CD4-positive, alpha-beta memory T cell (primary cell): ENCODE measurements at regions of chr1 and their contacts with region 1.

Region 1: GRCh38 chr1:110034451-110035235 is at the start of gene STRIP1:
- DNase-seq: peak; percentile 93 to 95 (median 95)
- H3K4me3 ChIP-seq: peak within 1 kb of the TSS; percentile 74 to 80
- H3K4me3 Mint-ChIP-seq: peak within 1 kb of the TSS; percentile 93 to 98 (median 97)
- H3K27ac ChIP-seq: peak within 1 kb of the TSS; percentile 97
- H3K27ac Mint-ChIP-seq: peak within 1 kb of the TSS; percentile 83 to 98 (median 95)
- H3K4me1 ChIP-seq: peaks cover 44% of the 10 kb centered on the region
- H3K4me1 Mint-ChIP-seq: peaks cover 34 to 66% (median 48%) of the 10 kb centered on the region in 4 donors
- H3K27me3 ChIP-seq: no peaks in the 10 kb centered on the region
- H3K27me3 Mint-ChIP-seq: no peaks in the 10 kb centered on the region
- total RNA-seq, gene STRIP1: 73.3 TPM

Region 2: DNA sequence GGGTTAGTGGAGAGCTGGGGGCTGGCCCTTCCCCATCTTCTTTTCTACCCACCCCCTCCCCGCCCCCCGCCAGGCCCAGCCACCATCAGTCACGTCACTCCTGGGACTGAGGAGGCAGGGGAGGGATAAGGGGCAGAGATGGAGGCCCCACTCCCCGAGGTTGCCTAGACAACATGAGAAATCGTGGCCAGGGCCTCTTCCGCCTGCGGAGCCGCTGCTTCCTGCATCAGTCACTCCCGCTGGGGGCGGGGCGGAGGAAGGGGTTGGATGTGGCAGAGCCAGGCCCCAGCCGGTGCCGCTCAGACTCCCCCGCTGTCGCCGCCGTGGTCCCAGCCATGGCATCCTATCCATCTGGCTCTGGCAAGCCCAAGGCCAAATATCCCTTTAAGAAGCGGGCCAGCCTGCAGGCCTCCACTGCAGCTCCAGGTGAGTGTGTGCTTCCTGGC is 413.8 kb before region 1 on chr1:
- CTCF ChIA-PET with region 1: no interaction called
- POLR2A ChIA-PET with region 1: interaction called, 3 read pairs
- intact Hi-C with region 1: loop called (anchors 1 kb)
- DNase-seq: peak; percentile 96 to 99 (median 97)
- H3K4me3 ChIP-seq: peak overlapping the region; percentile 76 to 93
- H3K4me3 Mint-ChIP-seq: peak overlapping the region; percentile 92 to 99 (median 96)
- H3K27ac ChIP-seq: peak overlapping the region; percentile 96
- H3K27ac Mint-ChIP-seq: peak overlapping the region; percentile 91 to 99 (median 99)
- H3K4me1 ChIP-seq: peaks cover 72% of the 10 kb centered on the region
- H3K4me1 Mint-ChIP-seq: peaks cover 47 to 86% (median 58%) of the 10 kb centered on the region in 4 donors
- H3K27me3 ChIP-seq: no peaks in the 10 kb centered on the region
- H3K27me3 Mint-ChIP-seq: no peaks in the 10 kb centered on the region

Region 3: GRCh38 chr1:109933856-109934711 is 100.6 kb before region 1 on chr1:
- CTCF ChIA-PET with region 1: no interaction called
- POLR2A ChIA-PET with region 1: no interaction called
- intact Hi-C with region 1: no loop called
- DNase-seq: no peak
- H3K4me3 ChIP-seq: no peak overlapping the region
- H3K4me3 Mint-ChIP-seq: peak overlapping the region in 1 of 8 donors; percentile 39
- H3K27ac ChIP-seq: no peak overlapping the region
- H3K27ac Mint-ChIP-seq: peak overlapping the region in 4 of 7 donors; percentile 27 to 81 (median 54)
- H3K4me1 ChIP-seq: peaks cover 9% of the 10 kb centered on the region
- H3K4me1 Mint-ChIP-seq: peaks cover 0 to 14% (median 5%) of the 10 kb centered on the region in 4 donors
- H3K27me3 ChIP-seq: no peaks in the 10 kb centered on the region
- H3K27me3 Mint-ChIP-seq: no peaks in the 10 kb centered on the region

Region 4: DNA sequence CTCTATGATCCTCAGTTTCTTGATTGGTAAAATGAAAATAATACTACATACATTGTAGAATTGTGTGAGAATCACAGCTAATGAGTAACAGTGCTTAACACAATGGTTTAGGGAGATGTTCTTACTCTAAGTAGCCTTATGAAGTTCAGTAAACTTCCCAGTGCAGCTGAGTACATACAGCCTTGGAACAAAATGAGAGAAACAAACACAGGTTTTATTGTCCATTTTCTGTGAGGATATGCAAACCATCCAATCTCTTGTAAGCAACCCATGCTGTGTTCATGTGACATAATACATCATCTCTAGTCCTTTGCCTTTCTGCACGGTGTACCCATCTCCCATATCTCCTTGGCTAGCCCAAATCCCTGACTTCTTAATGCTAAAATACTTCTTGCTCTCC is 14.9 kb before region 1 on chr1:
- CTCF ChIA-PET with region 1: interaction called, 27 read pairs
- POLR2A ChIA-PET with region 1: interaction called, 4 read pairs
- intact Hi-C with region 1: no loop called
- DNase-seq: no peak
- H3K4me3 ChIP-seq: no peak overlapping the region
- H3K4me3 Mint-ChIP-seq: no peak overlapping the region
- H3K27ac ChIP-seq: no peak overlapping the region
- H3K27ac Mint-ChIP-seq: peak overlapping the region in 2 of 7 donors; percentile 11 to 61
- H3K4me1 ChIP-seq: no peaks in the 10 kb centered on the region
- H3K4me1 Mint-ChIP-seq: no peaks in the 10 kb centered on the region
- H3K27me3 ChIP-seq: no peaks in the 10 kb centered on the region
- H3K27me3 Mint-ChIP-seq: no peaks in the 10 kb centered on the region

Region 5: DNA sequence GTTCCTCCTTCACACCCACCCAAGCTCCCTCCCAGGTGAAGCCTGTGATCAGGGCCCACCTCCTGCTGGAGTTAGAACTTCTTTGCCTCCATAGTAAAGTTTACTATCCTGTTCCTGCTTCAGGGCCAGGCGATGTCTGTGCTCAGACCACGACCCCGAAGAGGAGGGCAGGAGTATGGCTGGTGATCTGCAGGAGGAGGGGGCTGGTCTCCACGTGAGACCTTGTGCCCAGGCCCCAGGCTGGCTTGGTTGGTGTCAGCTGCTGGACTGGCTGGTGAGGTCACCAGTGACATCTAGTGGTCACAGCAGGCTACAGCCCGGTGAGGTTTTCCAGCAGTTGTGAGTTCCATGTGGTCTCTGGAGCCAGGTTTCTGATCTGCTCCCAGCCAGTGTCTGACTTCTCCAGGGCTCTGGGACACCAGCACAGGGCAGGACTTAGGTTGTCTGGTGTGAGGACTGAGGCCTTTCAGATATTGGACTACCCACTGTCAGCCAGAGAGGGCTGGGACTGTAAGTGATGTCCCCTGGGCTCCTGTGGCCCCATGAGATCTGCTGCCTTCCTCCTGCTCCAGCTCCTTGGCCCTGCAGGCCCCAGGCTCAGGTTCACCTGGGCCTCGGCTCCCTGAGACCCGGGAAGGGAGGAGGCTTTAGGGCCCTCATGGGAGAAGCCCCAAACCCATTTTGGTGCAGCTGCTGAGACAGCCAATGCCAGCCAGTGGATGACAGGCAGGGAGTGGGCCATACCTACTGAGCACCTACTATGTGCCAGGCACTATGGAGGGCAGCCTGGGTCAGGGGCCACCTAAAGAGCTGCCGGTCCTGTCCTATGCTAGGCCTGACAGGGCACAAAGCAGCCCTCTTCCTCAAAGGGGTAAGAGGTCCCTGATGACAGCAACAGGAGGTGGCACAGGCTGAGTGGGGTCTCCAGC is 71.6 kb after region 1 on chr1:
- CTCF ChIA-PET with region 1: interaction called, 44 read pairs
- POLR2A ChIA-PET with region 1: no interaction called
- intact Hi-C with region 1: no loop called
- DNase-seq: peak; percentile 43 to 56 (median 53)
- H3K4me3 ChIP-seq: no peak overlapping the region
- H3K4me3 Mint-ChIP-seq: no peak overlapping the region
- H3K27ac ChIP-seq: no peak overlapping the region
- H3K27ac Mint-ChIP-seq: peak overlapping the region in 1 of 7 donors; percentile 56
- H3K4me1 ChIP-seq: no peaks in the 10 kb centered on the region
- H3K4me1 Mint-ChIP-seq: no peaks in the 10 kb centered on the region
- H3K27me3 ChIP-seq: no peaks in the 10 kb centered on the region
- H3K27me3 Mint-ChIP-seq: peaks cover 6 to 10% of the 10 kb centered on the region in 2 donors

Region 6: GRCh38 chr1:110123224-110123623 is 88.6 kb after region 1 on chr1:
- CTCF ChIA-PET with region 1: no interaction called
- POLR2A ChIA-PET with region 1: no interaction called
- intact Hi-C with region 1: no loop called
- DNase-seq: no peak
- H3K4me3 ChIP-seq: no peak overlapping the region
- H3K4me3 Mint-ChIP-seq: no peak overlapping the region
- H3K27ac ChIP-seq: no peak overlapping the region
- H3K27ac Mint-ChIP-seq: no peak overlapping the region
- H3K4me1 ChIP-seq: no peaks in the 10 kb centered on the region
- H3K4me1 Mint-ChIP-seq: peaks cover 0 to 5% (median 2%) of the 10 kb centered on the region in 4 donors
- H3K27me3 ChIP-seq: no peaks in the 10 kb centered on the region
- H3K27me3 Mint-ChIP-seq: peaks cover 6 to 18% of the 10 kb centered on the region in 2 donors

Region 7: GRCh38 chr1:110328274-110328673 is 293.6 kb after region 1 on chr1:
- CTCF ChIA-PET with region 1: no interaction called
- POLR2A ChIA-PET with region 1: no interaction called
- intact Hi-C with region 1: no loop called
- DNase-seq: no peak
- H3K4me3 ChIP-seq: no peak overlapping the region
- H3K4me3 Mint-ChIP-seq: no peak overlapping the region
- H3K27ac ChIP-seq: no peak overlapping the region
- H3K27ac Mint-ChIP-seq: no peak overlapping the region
- H3K4me1 ChIP-seq: no peaks in the 10 kb centered on the region
- H3K4me1 Mint-ChIP-seq: no peaks in the 10 kb centered on the region
- H3K27me3 ChIP-seq: no peaks in the 10 kb centered on the region
- H3K27me3 Mint-ChIP-seq: no peaks in the 10 kb centered on the region

Region 8: DNA sequence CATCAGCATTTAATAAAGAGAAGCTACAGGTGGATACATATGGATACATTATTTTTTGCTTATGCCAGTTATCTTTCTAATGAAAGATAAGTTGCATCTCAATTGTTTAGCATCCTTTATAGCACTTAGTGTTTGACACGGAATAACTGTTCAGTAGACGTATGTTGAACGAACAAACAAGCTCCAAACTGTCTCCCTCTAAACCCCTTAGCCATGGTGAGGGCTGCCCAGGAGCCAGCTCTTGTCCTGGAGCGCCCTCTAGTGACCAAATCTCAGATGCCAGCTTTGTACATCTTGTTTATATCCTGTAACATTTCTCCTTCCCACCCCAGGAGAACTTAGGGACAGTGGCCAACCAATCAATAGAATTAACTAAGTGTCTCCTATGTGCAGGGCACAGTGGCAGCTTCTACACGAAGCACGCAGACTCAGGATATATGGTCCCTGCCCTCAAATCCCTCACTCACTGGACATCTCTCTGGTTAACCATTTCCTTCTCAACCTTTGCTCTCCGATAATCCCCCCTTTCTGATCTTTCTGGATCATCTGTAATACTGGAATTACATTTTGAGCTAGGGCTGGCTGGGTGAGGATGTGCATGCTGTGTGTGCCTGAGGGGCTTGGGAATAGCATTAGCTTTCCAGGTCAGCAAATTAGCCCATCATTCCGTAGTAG is 461.4 kb after region 1 on chr1:
- CTCF ChIA-PET with region 1: interaction called, 15 read pairs
- POLR2A ChIA-PET with region 1: no interaction called
- intact Hi-C with region 1: no loop called
- DNase-seq: peak; percentile 62 to 73 (median 69)
- H3K4me3 ChIP-seq: no peak overlapping the region
- H3K4me3 Mint-ChIP-seq: no peak overlapping the region
- H3K27ac ChIP-seq: no peak overlapping the region
- H3K27ac Mint-ChIP-seq: no peak overlapping the region
- H3K4me1 ChIP-seq: no peaks in the 10 kb centered on the region
- H3K4me1 Mint-ChIP-seq: no peaks in the 10 kb centered on the region
- H3K27me3 ChIP-seq: no peaks in the 10 kb centered on the region
- H3K27me3 Mint-ChIP-seq: no peaks in the 10 kb centered on the region